CD4-positive, alpha-beta T cell (primary cell): ENCODE measurements at regions of chr11 and their contacts with region 1.

Region 1: GRCh38 chr11:10943968-10944367 is 86.1 kb upstream of the ZBED5 start:
- DNase-seq: no peak
- ATAC-seq: no peak
- H3K4me3 ChIP-seq: no peak overlapping the region
- H3K4me3 Mint-ChIP-seq: no peak overlapping the region
- H3K27ac ChIP-seq: no peak overlapping the region
- H3K27ac Mint-ChIP-seq: no peak overlapping the region
- H3K4me1 ChIP-seq: no peaks in the 10 kb centered on the region
- H3K4me1 Mint-ChIP-seq: no peaks in the 10 kb centered on the region
- H3K27me3 ChIP-seq: no peaks in the 10 kb centered on the region
- H3K27me3 Mint-ChIP-seq: peaks cover 10% of the 10 kb centered on the region
- CTCF ChIP-seq: no peak

Region 2: DNA sequence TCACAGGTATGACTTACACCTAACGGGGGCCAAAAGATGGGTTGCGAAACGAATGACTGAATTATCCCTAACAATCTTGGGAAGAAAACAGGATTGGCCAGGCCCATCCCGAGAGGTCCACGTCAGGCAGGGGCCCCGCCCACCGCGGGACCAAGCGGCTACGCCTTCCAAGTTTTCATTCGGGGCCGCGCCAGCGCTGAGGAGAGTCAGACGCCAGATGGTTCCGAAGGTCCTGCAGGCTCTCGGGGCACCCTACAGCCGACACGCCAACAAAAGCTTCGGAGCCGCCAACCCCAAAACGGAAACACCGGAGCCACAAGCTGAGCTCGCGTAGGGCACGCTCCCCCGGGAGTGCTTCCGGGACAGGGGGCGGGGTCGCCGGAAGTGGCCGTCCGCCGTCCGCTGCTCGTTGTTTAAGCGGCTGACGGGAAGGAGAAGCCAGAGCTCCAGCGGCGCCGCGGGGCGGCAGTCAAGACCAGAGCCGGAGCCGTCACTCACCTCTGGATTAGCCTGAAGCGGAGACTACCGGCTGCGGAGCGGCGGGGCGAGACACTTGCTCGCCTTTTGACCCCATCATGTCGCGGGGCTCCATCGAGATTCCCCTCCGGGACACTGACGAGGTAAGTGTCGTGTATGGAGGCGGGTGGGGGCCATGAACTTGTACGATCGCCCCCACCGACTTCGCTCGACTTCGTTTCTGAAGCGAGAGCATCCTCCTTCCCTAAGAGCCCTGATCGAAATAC is 193.0 kb before region 1 on chr11 and contains the start of gene CTR9:
- CTCF ChIA-PET with region 1: no interaction called
- POLR2A ChIA-PET with region 1: no interaction called
- intact Hi-C with region 1: no loop called
- DNase-seq: peak; percentile 82 to 96 (median 90)
- ATAC-seq: peak; percentile 86
- H3K4me3 ChIP-seq: peak within 1 kb of the TSS; percentile 95
- H3K4me3 Mint-ChIP-seq: peak within 1 kb of the TSS; percentile 97
- H3K27ac ChIP-seq: peak within 1 kb of the TSS; percentile 83 to 84
- H3K27ac Mint-ChIP-seq: peak within 1 kb of the TSS; percentile 93
- H3K4me1 ChIP-seq: peaks cover 14% of the 10 kb centered on the region
- H3K4me1 Mint-ChIP-seq: peaks cover 35% of the 10 kb centered on the region
- H3K27me3 ChIP-seq: no peaks in the 10 kb centered on the region
- H3K27me3 Mint-ChIP-seq: no peaks in the 10 kb centered on the region
- CTCF ChIP-seq: no peak
- total RNA-seq, gene CTR9: 34.0 to 34.7 TPM

Region 3: GRCh38 chr11:10922944-10923343 is 21.0 kb before region 1 on chr11:
- CTCF ChIA-PET with region 1: no interaction called
- POLR2A ChIA-PET with region 1: no interaction called
- intact Hi-C with region 1: no loop called
- DNase-seq: no peak
- ATAC-seq: no peak
- H3K4me3 ChIP-seq: no peak overlapping the region
- H3K4me3 Mint-ChIP-seq: no peak overlapping the region
- H3K27ac ChIP-seq: no peak overlapping the region
- H3K27ac Mint-ChIP-seq: no peak overlapping the region
- H3K4me1 ChIP-seq: no peaks in the 10 kb centered on the region
- H3K4me1 Mint-ChIP-seq: no peaks in the 10 kb centered on the region
- H3K27me3 ChIP-seq: no peaks in the 10 kb centered on the region
- H3K27me3 Mint-ChIP-seq: no peaks in the 10 kb centered on the region
- CTCF ChIP-seq: no peak

Region 4: DNA sequence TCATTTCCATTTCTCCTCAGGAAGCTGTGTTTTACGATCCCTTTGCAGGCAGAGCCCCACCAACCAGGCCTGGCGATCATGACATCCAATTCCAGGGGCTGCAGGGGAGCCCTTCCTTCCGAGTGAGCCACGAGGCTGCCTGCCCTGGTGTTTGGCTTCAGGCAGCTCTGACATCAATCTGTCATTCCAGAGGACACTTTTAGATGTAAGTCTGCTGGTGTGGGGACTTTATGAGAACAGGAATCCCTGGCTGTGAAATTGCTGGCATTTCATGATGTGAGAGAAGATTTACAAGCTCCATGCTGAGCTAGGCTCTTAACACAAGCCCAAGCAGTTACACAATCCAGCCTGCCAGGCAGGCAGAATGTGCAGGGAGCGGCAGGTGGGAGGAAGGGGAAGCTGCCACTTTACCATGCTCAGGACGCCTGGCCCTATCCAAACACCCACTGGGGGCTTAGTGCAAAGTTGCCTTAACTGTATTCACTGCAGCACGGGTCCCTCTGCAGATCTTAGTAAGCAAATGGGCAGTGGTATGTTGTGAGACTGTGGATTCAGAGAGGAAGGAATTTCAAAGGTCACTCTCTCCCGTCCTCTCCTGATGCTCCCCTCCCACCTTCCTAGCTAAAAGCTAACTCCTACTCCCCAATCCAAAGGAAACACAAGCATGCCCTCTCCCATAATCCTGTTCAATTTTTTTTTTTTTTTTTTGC is 1123.0 kb after region 1 on chr11:
- CTCF ChIA-PET with region 1: no interaction called
- POLR2A ChIA-PET with region 1: no interaction called
- intact Hi-C with region 1: loop called in 1 of 2 experiments (anchors 5 kb)
- DNase-seq: no peak
- ATAC-seq: no peak
- H3K4me3 ChIP-seq: no peak overlapping the region
- H3K4me3 Mint-ChIP-seq: no peak overlapping the region
- H3K27ac ChIP-seq: no peak overlapping the region
- H3K27ac Mint-ChIP-seq: no peak overlapping the region
- H3K4me1 ChIP-seq: peaks cover 11% of the 10 kb centered on the region
- H3K4me1 Mint-ChIP-seq: no peaks in the 10 kb centered on the region
- H3K27me3 ChIP-seq: no peaks in the 10 kb centered on the region
- H3K27me3 Mint-ChIP-seq: no peaks in the 10 kb centered on the region
- CTCF ChIP-seq: no peak